ENCODE measurements at regions of chr12 and their contacts with region 1.

Region 1: DNA sequence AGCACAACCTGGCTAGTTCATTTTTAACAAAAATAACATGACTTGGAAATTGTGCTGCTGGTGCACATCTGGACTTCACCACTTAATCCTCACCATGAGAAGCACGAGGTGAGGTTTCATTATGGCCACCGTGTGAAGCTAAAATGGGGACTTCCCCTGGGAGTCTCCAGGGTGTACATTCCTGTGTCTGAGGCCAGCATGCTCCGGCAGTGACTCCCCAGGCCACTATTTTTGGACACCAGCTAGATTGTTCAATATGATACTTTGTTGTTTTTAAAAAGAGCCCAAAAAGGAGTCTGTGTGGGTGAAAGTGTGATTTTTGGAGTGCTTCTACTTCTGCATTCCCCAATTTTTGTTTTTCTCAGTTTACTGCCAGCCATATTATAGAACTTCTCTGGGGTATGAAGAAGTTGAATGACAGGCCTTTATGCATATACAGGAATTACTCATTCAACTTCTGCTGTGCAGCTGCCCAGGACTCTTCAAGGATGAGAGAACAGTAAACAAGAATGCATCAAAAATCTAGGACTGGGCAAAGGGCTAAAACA is 16.9 kb upstream of the AICDA start:
- DNase-seq: peak; percentile 98
- ATAC-seq: peak; percentile 96
- H3K4me3 ChIP-seq: no peak overlapping the region
- H3K27ac ChIP-seq: peak overlapping the region; percentile 75
- H3K4me1 ChIP-seq: peaks cover 18% of the 10 kb centered on the region
- H3K27me3 ChIP-seq: no peaks in the 10 kb centered on the region
- CTCF ChIP-seq: no peak
- EP300 ChIP-seq: peak; percentile 91 to 98
- POLR2A ChIP-seq: no peak
- RAD21 ChIP-seq: peak; percentile 3; the same call in 1 of the 2 replicates

Region 2: GRCh38 chr12:7907009-7907408 is 722.6 kb before region 1 on chr12:
- CTCF ChIA-PET with region 1: no interaction called
- POLR2A ChIA-PET with region 1: no interaction called
- RAD21 ChIA-PET with region 1: no interaction called
- SMC1A ChIA-PET with region 1: no interaction called
- in situ Hi-C with region 1: no loop called
- intact Hi-C with region 1: no loop called
- DNase-seq: no peak
- ATAC-seq: peak; percentile 58
- H3K4me3 ChIP-seq: no peak overlapping the region
- H3K27ac ChIP-seq: no peak overlapping the region
- H3K4me1 ChIP-seq: no peaks in the 10 kb centered on the region
- H3K27me3 ChIP-seq: no peaks in the 10 kb centered on the region
- CTCF ChIP-seq: peak; percentile 18 to 27 (median 26); a peak in 4 of 6 replicates
- EP300 ChIP-seq: no peak
- POLR2A ChIP-seq: no peak
- RAD21 ChIP-seq: no peak

Region 3: GRCh38 chr12:8493084-8493483 is 136.5 kb before region 1 on chr12:
- CTCF ChIA-PET with region 1: no interaction called
- POLR2A ChIA-PET with region 1: no interaction called
- RAD21 ChIA-PET with region 1: no interaction called
- SMC1A ChIA-PET with region 1: no interaction called
- in situ Hi-C with region 1: no loop called
- intact Hi-C with region 1: no loop called
- DNase-seq: peak; percentile 72
- ATAC-seq: peak; percentile 99
- H3K4me3 ChIP-seq: no peak overlapping the region
- H3K27ac ChIP-seq: no peak overlapping the region
- H3K4me1 ChIP-seq: peaks cover 10% of the 10 kb centered on the region
- H3K27me3 ChIP-seq: no peaks in the 10 kb centered on the region
- CTCF ChIP-seq: no peak
- EP300 ChIP-seq: peak in 1 of 2 experiments; percentile 72; a peak in 1 of 4 replicates
- POLR2A ChIP-seq: no peak
- RAD21 ChIP-seq: no peak

Region 4: GRCh38 chr12:8609061-8609570 is 20.4 kb before region 1 on chr12:
- CTCF ChIA-PET with region 1: interaction called, 57 read pairs
- POLR2A ChIA-PET with region 1: interaction called, 17 read pairs
- RAD21 ChIA-PET with region 1: interaction called, 81 read pairs
- SMC1A ChIA-PET with region 1: interaction called, 80 read pairs
- in situ Hi-C with region 1: no loop called
- intact Hi-C with region 1: loop called (anchors 1 kb)
- DNase-seq: no peak
- ATAC-seq: peak; percentile 16
- H3K4me3 ChIP-seq: peak overlapping the region; percentile 51
- H3K27ac ChIP-seq: peak overlapping the region; percentile 39
- H3K4me1 ChIP-seq: peaks cover 30% of the 10 kb centered on the region
- H3K27me3 ChIP-seq: no peaks in the 10 kb centered on the region
- CTCF ChIP-seq: peak; percentile 71 to 86 (median 86)
- EP300 ChIP-seq: no peak
- POLR2A ChIP-seq: peak; percentile 51; the same call in 1 of the 2 replicates
- RAD21 ChIP-seq: peak; percentile 75

Region 5: DNA sequence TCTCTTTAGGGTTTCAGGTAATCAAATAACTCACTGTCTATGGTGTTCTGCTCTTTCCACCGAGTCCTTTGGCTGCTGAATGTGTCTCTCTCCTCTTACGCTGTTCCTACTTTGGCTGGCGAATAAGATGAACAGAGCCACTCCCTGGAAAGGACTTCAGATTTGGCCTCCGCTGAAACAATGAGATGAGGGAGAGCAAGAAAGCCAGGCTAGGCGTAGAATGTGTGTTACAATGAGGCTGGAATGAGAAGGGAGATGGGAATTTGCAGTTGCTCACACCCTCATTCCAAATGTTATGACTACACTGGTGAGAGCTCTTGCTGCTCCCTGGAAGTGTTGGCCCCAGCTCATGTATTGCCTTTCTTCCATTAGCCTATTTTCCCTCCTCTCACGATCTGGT is 33.0 kb after region 1 on chr12 and contains the start of gene MFAP5:
- CTCF ChIA-PET with region 1: interaction called, 10 read pairs
- POLR2A ChIA-PET with region 1: no interaction called
- RAD21 ChIA-PET with region 1: interaction called, 4 read pairs
- SMC1A ChIA-PET with region 1: interaction called, 5 read pairs
- in situ Hi-C with region 1: no loop called
- intact Hi-C with region 1: no loop called
- DNase-seq: no peak
- ATAC-seq: no peak
- H3K4me3 ChIP-seq: no peak within 1 kb of the TSS
- H3K27ac ChIP-seq: no peak within 1 kb of the TSS
- H3K4me1 ChIP-seq: no peaks in the 10 kb centered on the region
- H3K27me3 ChIP-seq: peaks cover 0 to 5% of the 10 kb centered on the region in 2 experiments; a peak in 2 of 4 replicates
- CTCF ChIP-seq: no peak
- EP300 ChIP-seq: no peak
- POLR2A ChIP-seq: no peak
- RAD21 ChIP-seq: no peak
- polyA plus RNA-seq, gene MFAP5: not detected

Region 6: DNA sequence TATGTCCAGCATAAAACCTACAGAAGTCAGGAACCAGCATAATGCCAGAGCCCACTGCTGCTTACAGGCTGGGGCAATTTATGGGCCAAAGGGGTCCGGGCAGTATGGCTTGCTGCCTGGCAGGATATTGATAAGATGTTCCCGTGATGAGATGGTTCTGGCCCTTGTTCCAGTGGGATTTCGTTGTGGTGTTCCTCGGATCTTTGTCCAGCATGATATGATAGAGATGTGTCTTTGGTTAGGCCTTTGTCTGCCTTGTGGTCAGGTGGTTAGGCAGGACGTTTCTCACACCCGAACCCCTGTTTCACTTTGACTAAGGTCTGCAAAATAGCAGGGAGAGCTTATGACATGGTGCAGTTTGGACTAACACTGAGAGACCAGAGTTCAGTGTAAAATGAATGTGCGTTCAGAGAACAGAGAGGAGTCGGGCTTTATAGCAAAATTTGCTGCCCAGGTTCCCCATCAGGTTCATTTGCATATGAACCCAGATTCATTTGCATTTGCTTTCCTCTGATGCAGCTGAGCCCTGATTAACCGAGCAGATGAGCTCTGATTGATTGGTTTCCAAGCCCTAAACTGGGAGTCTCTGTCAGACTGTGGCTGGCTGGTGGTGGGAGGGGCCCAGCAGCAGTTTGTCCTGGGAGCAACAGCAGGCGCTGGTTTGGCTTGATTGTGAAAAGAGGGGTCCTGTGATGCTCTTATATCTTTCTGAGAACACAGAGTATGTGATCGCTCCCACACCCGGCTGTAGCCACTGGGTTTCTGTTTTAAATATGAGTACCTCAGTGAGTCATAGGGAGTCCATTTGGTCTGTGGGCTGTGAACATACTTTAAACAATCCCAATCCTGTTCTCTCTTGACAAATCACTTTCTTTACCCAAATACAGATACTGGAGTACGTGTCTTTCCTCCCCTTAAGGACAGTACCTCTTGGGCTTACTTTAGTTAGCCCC is 734.9 kb after region 1 on chr12:
- CTCF ChIA-PET with region 1: no interaction called
- POLR2A ChIA-PET with region 1: no interaction called
- RAD21 ChIA-PET with region 1: no interaction called
- SMC1A ChIA-PET with region 1: no interaction called
- in situ Hi-C with region 1: no loop called
- intact Hi-C with region 1: loop called (anchors 5 kb)
- DNase-seq: peak; percentile 98
- ATAC-seq: peak; percentile 89
- H3K4me3 ChIP-seq: peak overlapping the region; percentile 29; the same call in 1 of the 2 replicates
- H3K27ac ChIP-seq: peak overlapping the region; percentile 88
- H3K4me1 ChIP-seq: peaks cover 42% of the 10 kb centered on the region
- H3K27me3 ChIP-seq: no peaks in the 10 kb centered on the region
- CTCF ChIP-seq: no peak
- EP300 ChIP-seq: peak; percentile 80 to 82
- POLR2A ChIP-seq: peak; percentile 89
- RAD21 ChIP-seq: 0 out of 2 replicates have a peak, but pooled peaks have one; percentile 9

Measured in GM12878 (cell line).